Right ventricle myocardium inferior (tissue), 1 donor: ENCODE measurements at regions of chr11 and their contacts with region 1.

Region 1: DNA sequence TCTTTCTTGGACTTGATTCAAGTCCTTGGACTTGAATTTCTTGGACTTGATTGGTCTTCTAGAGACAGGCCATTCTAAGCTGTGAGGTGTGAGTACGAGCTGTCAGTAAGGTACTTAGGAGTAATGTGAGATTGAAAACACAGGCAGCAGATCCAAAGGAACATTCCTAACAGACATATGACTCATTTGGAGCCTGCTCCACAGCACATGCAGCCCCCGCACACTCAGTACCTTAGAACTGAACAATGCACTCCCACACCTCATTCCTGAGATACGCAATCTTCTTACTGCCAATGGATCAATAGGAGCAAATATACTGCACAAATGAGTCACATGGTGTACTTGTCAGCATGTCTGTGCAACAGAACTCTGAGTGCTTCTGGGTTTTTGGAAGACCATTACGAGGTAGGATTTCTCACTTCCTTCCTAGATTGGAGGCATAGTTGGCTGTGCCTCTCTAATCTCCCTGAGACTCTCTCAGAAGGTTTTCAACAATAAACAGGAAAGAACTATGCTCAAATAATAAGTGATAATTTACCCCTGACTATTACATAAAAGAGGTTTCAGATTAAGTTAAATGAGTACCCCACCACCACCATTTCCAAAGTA is 243.1 kb downstream of the KCNA4 start:
- DNase-seq: peak; percentile 69
- ATAC-seq: peak; percentile 98

Region 2: DNA sequence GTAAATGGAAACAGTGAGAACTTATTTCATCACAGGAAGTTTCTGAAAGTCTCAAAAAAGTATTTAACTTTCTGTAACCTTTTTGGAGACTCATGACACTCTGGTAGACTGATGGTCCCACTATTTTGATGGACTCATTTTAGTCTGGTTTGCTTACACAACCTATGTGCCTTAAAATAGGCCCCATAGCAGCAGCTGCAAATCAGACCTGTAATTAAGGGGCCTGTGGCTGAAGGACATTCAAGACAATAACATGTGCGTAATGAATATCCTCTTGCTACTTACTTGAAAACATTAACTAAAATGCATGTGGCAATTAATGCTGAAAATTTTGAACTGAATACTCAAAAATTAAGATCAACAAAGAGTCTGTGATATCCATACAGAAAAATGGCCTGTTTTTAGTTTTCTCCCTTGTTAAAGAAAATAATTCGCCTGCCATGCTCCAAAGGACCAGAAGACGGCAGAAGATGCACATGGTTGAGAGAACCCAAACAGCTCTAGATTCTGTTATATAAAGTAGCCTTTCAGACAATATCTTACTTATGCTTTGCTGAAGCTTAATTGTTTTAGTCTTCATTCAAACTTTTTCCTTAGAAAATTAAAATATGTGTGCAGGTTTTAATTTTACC is 325.4 kb before region 1 on chr11:
- intact Hi-C with region 1: loop called (anchors 10 kb)
- DNase-seq: no peak
- ATAC-seq: peak; percentile 57

Region 3: GRCh38 chr11:29534836-29535235 is 238.9 kb before region 1 on chr11:
- intact Hi-C with region 1: loop called (anchors 5 kb)
- DNase-seq: no peak
- ATAC-seq: no peak

Region 4: DNA sequence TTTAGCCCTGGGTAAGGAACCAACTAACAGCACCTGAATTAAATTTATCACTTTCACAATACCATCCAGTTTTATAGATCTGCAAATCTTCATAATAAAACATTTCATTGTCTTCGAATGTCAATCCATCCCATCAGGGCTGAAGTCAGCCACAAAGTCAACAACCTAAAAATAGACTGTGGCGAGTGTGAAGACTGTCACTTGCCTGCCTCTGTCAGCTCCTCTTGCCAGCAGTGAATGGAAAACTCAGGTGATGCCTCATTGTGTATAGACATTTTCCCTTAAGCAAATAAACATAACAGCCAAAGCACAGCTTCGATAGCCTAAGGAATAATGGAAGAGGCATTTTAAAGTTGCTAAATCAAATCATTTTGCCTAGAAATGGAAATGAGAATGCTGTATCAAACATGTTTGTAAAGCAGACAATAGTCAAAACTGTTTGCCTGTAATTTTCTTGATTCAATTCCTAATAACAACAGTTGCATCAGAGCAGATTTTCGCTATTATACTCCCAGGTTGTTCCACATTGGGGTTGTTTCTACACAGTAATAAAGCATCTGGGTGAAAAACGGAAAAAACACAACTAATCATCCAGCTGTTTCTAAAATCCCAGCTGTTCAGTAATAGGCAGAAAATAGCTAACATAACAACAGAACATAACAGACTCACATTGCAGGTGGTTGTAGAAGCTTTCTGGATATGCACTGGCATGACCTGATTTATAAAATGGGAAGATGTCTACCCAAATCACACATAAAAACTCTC is 227.4 kb after region 1 on chr11:
- intact Hi-C with region 1: loop called (anchors 10 kb)
- DNase-seq: no peak
- ATAC-seq: peak; percentile 77